ENCODE measurements at regions of chr7 and their contacts with region 1.

Region 1: DNA sequence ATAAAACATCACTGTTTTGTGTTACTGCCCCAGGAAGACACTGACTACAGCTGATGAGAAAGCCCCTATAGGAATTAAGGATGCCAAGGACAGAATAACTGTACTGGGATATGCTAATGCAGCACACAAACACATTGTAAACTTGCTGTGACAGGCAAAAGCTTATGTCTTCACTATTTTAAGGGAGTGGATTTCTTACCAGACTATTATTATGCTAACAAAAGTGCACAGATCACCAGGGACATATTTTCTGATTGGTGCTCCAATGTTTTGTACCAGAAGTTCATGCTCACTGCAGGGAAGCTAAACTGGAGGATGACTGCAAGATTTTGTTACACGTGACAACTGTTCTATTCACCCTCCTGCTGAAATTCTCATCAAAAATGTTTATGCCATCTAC is 48.1 kb upstream of the PTPN12 start:
- DNase-seq: no peak
- H3K4me3 ChIP-seq: no peak overlapping the region
- H3K27ac ChIP-seq: no peak overlapping the region
- H3K4me1 ChIP-seq: no peaks in the 10 kb centered on the region
- H3K27me3 ChIP-seq: no peaks in the 10 kb centered on the region
- CTCF ChIP-seq: no peak

Region 2: DNA sequence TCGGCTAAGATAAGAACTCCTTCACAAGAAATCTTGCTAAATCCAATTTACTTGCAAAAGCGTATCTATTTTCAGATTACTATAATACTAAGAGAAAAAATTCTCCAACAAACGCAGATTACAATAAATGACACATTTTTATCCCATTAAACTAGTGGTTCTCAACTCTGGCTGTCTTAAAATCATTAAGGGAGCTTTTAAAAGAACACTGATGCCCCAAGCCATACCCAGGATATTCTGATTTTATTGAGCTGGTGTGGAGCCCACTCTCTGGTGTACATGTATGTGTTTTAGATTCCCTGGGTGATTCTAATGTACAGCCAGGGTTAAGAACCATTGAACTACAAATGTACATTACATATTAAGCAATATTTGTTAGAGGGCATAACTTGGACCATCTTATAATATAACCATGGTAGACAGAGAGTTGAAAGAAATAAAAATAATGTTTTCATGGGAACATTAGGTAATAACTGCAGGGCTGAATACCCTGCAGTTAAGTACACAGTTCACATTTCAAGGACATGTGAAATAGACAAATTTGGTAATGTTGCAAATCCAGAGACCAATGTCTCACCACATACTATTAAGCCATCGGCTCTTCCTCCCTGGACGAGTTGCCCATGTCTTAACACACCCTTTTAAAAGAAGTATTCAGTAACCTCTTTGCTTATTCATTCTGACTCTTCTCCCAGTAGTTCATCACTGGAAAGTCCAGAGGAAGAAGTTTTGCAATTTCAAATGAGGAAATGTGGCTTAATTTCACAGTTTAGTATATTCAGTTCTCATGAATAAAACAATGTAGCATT is 79.0 kb before region 1 on chr7:
- CTCF ChIA-PET with region 1: no interaction called
- POLR2A ChIA-PET with region 1: no interaction called
- intact Hi-C with region 1: no loop called
- DNase-seq: peak; percentile 30 to 95
- H3K4me3 ChIP-seq: peak overlapping the region; percentile 45
- H3K27ac ChIP-seq: peak overlapping the region; percentile 100
- H3K4me1 ChIP-seq: peaks cover 63% of the 10 kb centered on the region
- H3K27me3 ChIP-seq: no peaks in the 10 kb centered on the region
- CTCF ChIP-seq: no peak

Region 3: GRCh38 chr7:77467408-77467807 is 21.6 kb before region 1 on chr7:
- CTCF ChIA-PET with region 1: no interaction called
- POLR2A ChIA-PET with region 1: no interaction called
- intact Hi-C with region 1: loop called (anchors 1 kb)
- DNase-seq: no peak
- H3K4me3 ChIP-seq: no peak overlapping the region
- H3K27ac ChIP-seq: no peak overlapping the region
- H3K4me1 ChIP-seq: peaks cover 7% of the 10 kb centered on the region
- H3K27me3 ChIP-seq: no peaks in the 10 kb centered on the region
- CTCF ChIP-seq: no peak